Activated CD4-positive, alpha-beta T cell treated with anti-CD3 and anti-CD28 coated beads for 36 hours (primary cell): ENCODE measurements at regions of chr3 and their contacts with region 1.

Region 1: DNA sequence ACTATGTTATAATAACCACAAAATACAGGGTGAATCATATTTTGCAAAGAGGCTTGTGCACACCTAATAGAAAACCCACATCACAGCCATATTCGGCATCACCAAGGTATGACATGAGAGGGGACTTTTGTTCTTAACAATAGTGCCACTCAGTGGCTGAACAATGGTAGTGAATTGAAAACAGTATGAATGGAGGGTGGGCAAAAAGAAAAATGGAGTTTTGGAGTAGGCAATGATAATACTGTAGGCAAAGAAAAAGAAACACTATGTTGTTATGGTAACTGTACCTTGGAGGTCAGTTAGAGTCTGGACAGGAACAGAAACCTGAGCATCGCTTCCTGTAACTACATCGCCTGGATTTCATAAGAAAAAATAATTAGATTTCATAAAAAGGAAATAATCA is 348.6 kb downstream of the PLCL2 start:
- DNase-seq: peak; percentile 47
- ATAC-seq: peak; percentile 91
- H3K4me3 Mint-ChIP-seq: no peak overlapping the region
- H3K27ac Mint-ChIP-seq: no peak overlapping the region
- H3K4me1 Mint-ChIP-seq: peaks cover 24% of the 10 kb centered on the region
- H3K27me3 Mint-ChIP-seq: no peaks in the 10 kb centered on the region

Region 2: DNA sequence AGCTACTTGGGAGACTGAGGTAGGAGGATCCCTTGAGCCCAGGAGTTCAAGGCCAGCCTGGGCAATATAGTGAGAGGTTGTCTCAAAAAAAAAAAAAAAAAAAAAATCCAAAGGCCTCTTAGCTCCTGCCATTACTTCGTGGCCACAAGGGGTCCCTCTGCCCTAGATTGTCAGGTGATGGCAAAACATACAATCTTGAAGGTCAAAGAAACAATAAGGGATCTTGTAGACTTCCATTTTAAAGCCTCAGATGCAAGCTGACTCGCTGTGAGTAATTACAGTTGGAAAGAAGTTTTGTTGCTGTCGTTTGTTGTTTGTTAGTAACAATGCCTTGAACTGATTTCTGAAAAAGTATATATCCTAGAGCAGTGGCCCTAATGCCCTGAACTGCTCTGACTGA is 404.6 kb before region 1 on chr3:
- CTCF ChIA-PET with region 1: interaction called, 4 read pairs
- POLR2A ChIA-PET with region 1: no interaction called
- intact Hi-C with region 1: loop called (anchors 1 kb)
- DNase-seq: peak; percentile 73
- ATAC-seq: peak; percentile 51
- H3K4me3 Mint-ChIP-seq: no peak overlapping the region
- H3K27ac Mint-ChIP-seq: no peak overlapping the region
- H3K4me1 Mint-ChIP-seq: peaks cover 16% of the 10 kb centered on the region
- H3K27me3 Mint-ChIP-seq: no peaks in the 10 kb centered on the region

Region 3: DNA sequence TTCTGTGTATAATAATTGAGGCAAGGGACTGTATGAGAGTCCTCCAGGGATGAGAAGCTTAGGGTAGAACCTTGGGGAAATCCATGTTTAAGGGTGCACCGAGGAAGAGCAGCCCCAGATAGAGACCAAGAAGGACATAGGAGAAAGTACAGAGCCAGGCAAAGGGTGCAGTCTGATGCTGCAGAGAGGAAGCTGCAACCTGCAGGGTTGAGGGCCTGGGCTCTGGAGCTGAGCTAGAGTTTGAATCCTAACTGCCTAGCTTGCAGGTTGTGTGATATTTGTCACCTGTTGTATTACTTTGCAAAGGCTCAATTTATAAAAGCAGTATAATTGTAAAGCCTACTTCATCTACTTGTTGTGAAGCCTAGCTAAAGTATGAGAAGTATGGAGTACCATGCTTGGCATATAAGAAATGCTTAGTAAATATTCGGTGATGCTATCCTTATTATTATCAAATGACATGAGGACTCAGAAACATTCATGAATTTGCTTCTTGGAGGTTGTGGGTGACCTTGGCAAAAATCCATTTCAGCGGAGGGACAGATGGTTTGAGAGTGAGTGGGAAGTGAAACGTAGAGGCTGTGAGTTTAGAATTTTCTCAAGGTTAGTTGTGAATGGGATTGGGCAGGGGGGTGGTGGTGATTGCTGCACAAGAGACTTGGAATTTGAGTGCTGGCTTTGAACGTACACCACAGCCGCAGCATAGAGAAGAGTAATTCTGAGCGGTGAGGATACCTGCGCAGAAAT is 304.8 kb before region 1 on chr3:
- CTCF ChIA-PET with region 1: no interaction called
- POLR2A ChIA-PET with region 1: no interaction called
- intact Hi-C with region 1: loop called in 1 of 2 experiments (anchors 5 kb)
- DNase-seq: no peak
- ATAC-seq: no peak
- H3K4me3 Mint-ChIP-seq: no peak overlapping the region
- H3K27ac Mint-ChIP-seq: no peak overlapping the region
- H3K4me1 Mint-ChIP-seq: peaks cover 68% of the 10 kb centered on the region
- H3K27me3 Mint-ChIP-seq: no peaks in the 10 kb centered on the region

Region 4: DNA sequence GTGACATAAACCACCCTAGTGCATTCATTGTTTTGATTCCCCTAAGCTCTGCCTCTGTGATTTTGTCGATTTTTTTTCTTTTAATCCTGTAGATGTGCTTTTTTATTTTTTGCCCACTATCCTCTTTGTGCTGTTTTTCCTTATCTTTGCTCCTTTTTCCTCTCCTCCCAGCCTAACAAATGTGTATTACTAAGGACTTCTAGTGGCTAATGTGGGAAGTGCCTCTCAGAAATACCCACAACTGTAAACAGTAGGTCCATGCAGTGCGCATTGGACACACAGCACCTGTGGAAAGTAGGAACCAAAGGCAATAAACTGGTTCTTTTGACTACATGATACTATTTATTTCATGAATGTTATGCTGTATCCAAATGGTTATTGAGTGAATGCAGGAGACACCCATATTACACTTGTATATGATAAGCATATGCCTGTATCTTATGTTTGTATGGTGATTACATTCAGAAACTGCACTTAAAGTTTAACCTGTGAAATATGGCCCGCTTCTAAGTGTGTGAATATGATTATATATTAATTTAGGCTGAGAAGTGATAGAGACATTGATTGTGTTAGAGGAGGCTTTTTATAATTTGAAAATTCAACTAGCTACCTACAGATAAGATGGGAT is 200.9 kb before region 1 on chr3:
- CTCF ChIA-PET with region 1: no interaction called
- POLR2A ChIA-PET with region 1: no interaction called
- intact Hi-C with region 1: loop called in 1 of 2 experiments (anchors 5 kb)
- DNase-seq: no peak
- ATAC-seq: no peak
- H3K4me3 Mint-ChIP-seq: no peak overlapping the region
- H3K27ac Mint-ChIP-seq: no peak overlapping the region
- H3K4me1 Mint-ChIP-seq: peaks cover 82% of the 10 kb centered on the region
- H3K27me3 Mint-ChIP-seq: no peaks in the 10 kb centered on the region